MCF 10A (cell line): ENCODE measurements at regions of chr10 and their contacts with region 1.

Region 1: GRCh38 chr10:26881600-26882331 is 21.0 kb upstream of the ABI1 start:
- DNase-seq: peak; percentile 77
- H3K4me3 Mint-ChIP-seq: no peak overlapping the region
- H3K27ac Mint-ChIP-seq: no peak overlapping the region
- H3K4me1 Mint-ChIP-seq: peaks cover 14% of the 10 kb centered on the region
- H3K27me3 Mint-ChIP-seq: peaks cover 21% of the 10 kb centered on the region
- CTCF ChIP-seq: peak; percentile 62

Region 2: GRCh38 chr10:26556748-26557640 is 324.8 kb before region 1 on chr10:
- CTCF ChIA-PET with region 1: interaction called, 3 read pairs
- POLR2A ChIA-PET with region 1: no interaction called
- intact Hi-C with region 1: loop called (anchors 5 kb)
- DNase-seq: peak; percentile 59
- H3K4me3 Mint-ChIP-seq: peak overlapping the region; percentile 14
- H3K27ac Mint-ChIP-seq: no peak overlapping the region
- H3K4me1 Mint-ChIP-seq: peaks cover 17% of the 10 kb centered on the region
- H3K27me3 Mint-ChIP-seq: peaks cover 49% of the 10 kb centered on the region
- CTCF ChIP-seq: peak; percentile 91

Region 3: DNA sequence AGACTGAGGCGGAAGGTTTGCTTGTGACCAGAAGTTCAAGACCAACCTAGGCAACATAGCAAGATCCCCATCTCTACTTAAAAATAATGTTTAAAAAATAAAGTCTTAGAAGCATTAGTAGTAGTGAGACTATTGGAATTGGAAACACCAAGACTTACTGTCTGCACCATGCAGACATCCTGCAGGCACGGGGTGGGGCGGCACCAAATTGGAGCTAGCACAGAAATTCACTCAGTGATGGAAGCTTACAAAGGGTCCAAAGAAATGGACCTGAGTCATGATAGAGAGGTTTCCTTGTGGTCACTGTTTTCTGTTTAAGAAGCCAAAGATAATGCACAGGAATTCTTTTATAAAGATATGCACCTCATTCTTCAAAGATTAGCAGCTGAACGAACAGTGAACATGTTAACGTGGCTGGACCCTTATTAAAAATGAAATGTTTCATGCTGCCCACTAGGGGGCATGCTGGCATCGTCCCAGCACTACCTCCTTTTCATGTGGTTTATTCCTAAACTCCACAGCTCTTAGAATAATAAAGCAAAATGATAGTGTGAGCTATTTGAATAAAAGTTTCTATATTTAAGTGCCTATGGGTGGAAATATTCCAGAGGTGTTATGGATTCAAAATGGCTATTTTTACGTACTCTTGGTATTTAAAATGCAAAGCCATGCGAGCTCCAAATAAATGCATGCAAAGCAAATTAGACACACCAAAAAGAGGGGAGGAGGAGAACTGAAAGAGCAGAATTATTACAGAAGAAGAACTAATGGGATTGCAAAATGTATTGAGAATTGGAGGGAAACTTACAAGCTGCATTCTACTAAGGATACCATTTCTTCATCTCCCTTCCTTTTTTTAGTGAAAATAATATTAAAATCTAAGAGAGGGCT is 155.7 kb before region 1 on chr10:
- CTCF ChIA-PET with region 1: interaction called, 144 read pairs
- POLR2A ChIA-PET with region 1: interaction called, 7 read pairs
- intact Hi-C with region 1: loop called (anchors 1 kb)
- DNase-seq: peak; percentile 63
- H3K4me3 Mint-ChIP-seq: no peak overlapping the region
- H3K27ac Mint-ChIP-seq: no peak overlapping the region
- H3K4me1 Mint-ChIP-seq: no peaks in the 10 kb centered on the region
- H3K27me3 Mint-ChIP-seq: no peaks in the 10 kb centered on the region
- CTCF ChIP-seq: peak; percentile 48

Region 4: DNA sequence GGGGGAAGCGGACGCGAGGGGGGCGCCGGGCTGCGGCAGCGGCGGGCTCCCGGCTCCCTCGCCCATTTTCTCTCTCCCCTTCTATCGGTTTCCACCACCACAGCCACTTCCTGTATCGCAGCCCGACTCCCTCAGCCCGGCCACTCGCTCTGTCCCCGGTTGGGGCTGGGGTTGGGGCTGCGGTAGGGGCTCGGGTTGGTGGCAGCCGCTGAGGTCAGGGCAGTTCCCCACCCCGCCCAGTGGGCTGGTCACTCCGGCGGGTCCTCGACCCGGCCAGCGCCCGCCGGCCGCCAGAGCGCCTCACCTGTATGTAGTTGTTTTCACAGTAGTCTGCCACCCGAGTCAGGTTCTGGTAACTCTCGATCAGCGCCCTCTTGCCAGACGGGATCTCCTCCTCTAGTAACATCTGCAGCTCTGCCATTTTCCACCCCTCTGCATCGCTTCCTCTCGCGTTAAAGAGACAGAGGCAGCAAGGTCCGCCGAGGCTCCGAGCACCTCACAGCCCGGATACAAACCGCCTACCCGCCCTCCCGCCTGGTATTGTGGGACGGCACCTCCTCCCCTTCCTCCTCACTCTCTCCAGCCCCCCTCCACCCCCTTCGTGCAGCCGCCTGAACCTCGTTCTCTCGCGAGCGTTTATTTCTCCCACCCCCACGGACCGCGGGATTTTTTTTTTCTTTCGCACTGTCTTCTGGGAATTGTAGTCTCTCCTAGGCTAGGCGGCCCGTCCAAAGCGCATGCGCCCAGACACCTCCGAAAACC is 21.1 kb before region 1 on chr10 and contains the start of gene ABI1:
- CTCF ChIA-PET with region 1: interaction called, 21 read pairs
- POLR2A ChIA-PET with region 1: interaction called, 15 read pairs
- intact Hi-C with region 1: loop called (anchors 1 kb)
- DNase-seq: peak; percentile 99
- H3K4me3 Mint-ChIP-seq: peak within 1 kb of the TSS; percentile 91
- H3K27ac Mint-ChIP-seq: peak within 1 kb of the TSS; percentile 95
- H3K4me1 Mint-ChIP-seq: peaks cover 12% of the 10 kb centered on the region
- H3K27me3 Mint-ChIP-seq: no peaks in the 10 kb centered on the region
- CTCF ChIP-seq: no peak
- total RNA-seq, gene ABI1: 43.0 and 53.0 TPM in 2 replicates

Region 5: DNA sequence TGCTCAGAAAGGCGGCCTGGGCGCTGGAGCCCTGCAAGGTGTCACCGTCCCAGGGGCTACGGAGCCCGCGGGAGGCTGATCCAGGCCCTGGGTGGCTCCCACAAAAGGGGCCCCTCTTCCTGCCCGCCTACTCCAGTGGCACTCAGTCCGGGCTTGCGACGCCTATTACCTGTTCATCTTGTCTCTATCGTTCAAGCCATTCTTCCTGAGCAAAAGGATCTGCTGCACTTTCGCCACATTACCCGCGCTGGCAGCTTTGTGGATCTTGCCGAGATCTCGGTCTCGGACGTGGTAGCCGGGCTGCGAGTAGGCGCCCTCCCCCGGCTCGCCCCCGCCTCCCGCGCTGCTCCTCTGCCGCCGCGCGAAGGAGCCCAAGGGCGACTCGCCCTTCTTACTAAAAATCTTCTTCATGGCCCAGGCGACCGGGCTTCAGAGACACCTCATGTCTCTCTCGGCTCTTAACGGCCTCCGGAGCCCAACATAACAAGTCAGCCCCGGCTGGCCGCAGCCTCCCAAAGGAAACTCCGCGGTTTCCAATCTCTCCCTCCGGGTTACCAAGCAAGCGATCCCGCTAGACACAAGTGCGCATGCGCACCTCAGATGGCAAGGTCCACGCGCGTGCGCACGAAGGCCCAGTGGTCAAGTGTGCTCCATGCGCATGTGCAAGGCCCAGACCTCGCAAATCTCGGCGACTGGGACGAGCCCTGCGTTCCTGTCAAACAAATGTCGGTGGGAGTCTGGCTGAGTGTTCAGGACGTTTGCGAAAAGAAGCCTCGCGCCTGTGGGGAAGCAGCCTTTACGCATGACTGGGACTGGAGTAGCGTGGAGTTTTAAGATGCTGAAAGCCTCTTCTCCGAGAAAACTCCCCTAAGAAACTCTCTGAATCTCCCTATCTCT is 218.4 kb after region 1 on chr10 and contains the start of gene ANKRD26:
- CTCF ChIA-PET with region 1: no interaction called
- POLR2A ChIA-PET with region 1: no interaction called
- intact Hi-C with region 1: no loop called
- DNase-seq: peak; percentile 97
- H3K4me3 Mint-ChIP-seq: peak within 1 kb of the TSS; percentile 81
- H3K27ac Mint-ChIP-seq: peak within 1 kb of the TSS; percentile 92
- H3K4me1 Mint-ChIP-seq: peaks cover 13% of the 10 kb centered on the region
- H3K27me3 Mint-ChIP-seq: no peaks in the 10 kb centered on the region
- CTCF ChIP-seq: no peak
- total RNA-seq, gene ANKRD26: 6.5 and 7.3 TPM in 2 replicates